Heart right ventricle (tissue), 16 donors: ENCODE measurements at regions of chr3 and their contacts with region 1.

Region 1: GRCh38 chr3:58575971-58576652 is 1.1 kb downstream of the FAM107A start:
- DNase-seq: peak in 1 of 2 donors; percentile 53
- ATAC-seq: peak in 7 of 8 donors; percentile 5 to 54 (median 38)
- H3K4me3 ChIP-seq: peak overlapping the region; percentile 33 to 61 (median 50)
- H3K27ac ChIP-seq: peak overlapping the region; percentile 77 to 96 (median 92)
- H3K4me1 ChIP-seq: peaks cover 9 to 70% (median 54%) of the 10 kb centered on the region in 9 donors
- H3K27me3 ChIP-seq: no peaks in the 10 kb centered on the region
- CTCF ChIP-seq: no peak

Region 2: GRCh38 chr3:58604031-58604430 is 27.9 kb after region 1 on chr3:
- intact Hi-C with region 1: loop called in 1 of 10 experiments (anchors 1 kb)
- DNase-seq: no peak
- ATAC-seq: no peak
- H3K4me3 ChIP-seq: no peak overlapping the region
- H3K27ac ChIP-seq: no peak overlapping the region
- H3K4me1 ChIP-seq: peaks cover 0 to 13% (median 3%) of the 10 kb centered on the region in 9 donors
- H3K27me3 ChIP-seq: no peaks in the 10 kb centered on the region
- CTCF ChIP-seq: no peak